ENCODE measurements at regions of chr17 and their contacts with region 1.

Region 1: DNA sequence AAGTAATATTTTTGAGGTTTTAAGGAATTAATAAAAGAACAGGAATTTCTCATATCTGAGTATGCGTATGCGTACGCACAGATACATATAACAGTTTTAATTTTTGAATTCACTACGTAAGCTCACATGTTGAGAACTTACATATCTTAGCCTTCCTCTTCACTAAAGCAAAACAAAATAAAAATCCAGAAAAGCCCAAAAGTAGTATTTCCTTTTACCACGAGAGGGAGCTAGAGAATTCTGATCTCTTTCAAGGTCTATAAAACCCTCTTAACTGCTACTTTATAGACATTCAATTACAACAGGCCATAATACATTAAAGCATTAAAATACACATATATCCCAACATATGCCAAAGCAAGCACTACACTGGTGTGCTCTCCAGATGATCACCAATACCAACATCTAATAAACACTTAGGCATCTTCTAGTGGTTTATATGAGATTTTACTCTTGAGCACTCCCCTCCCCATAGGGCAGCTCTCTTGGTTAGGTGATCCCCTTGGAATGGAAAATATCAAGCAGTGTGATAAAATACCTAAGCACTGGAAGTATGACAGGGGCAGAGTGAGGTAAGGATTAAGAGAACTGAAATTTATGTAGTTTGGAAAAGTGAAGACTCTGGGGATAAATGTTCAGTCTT is 94.0 kb downstream of the SKAP1 start:
- DNase-seq: no peak
- ATAC-seq: peak; percentile 50
- H3K4me3 ChIP-seq: no peak overlapping the region
- H3K27ac ChIP-seq: no peak overlapping the region
- H3K4me1 ChIP-seq: no peaks in the 10 kb centered on the region
- H3K27me3 ChIP-seq: peaks cover 0 to 10% of the 10 kb centered on the region in 2 donors
- CTCF ChIP-seq: peak; percentile 45 to 72 (median 69)
- POLR2A ChIP-seq: no peak

Region 2: GRCh38 chr17:48213797-48214196 is 122.2 kb before region 1 on chr17:
- intact Hi-C with region 1: no loop called
- DNase-seq: peak; percentile 12 to 55 (median 24)
- ATAC-seq: peak; percentile 35
- H3K4me3 ChIP-seq: no peak overlapping the region
- H3K27ac ChIP-seq: no peak overlapping the region
- H3K4me1 ChIP-seq: peaks cover 14% of the 10 kb centered on the region
- H3K27me3 ChIP-seq: no peaks in the 10 kb centered on the region
- CTCF ChIP-seq: no peak
- POLR2A ChIP-seq: no peak

Region 3: DNA sequence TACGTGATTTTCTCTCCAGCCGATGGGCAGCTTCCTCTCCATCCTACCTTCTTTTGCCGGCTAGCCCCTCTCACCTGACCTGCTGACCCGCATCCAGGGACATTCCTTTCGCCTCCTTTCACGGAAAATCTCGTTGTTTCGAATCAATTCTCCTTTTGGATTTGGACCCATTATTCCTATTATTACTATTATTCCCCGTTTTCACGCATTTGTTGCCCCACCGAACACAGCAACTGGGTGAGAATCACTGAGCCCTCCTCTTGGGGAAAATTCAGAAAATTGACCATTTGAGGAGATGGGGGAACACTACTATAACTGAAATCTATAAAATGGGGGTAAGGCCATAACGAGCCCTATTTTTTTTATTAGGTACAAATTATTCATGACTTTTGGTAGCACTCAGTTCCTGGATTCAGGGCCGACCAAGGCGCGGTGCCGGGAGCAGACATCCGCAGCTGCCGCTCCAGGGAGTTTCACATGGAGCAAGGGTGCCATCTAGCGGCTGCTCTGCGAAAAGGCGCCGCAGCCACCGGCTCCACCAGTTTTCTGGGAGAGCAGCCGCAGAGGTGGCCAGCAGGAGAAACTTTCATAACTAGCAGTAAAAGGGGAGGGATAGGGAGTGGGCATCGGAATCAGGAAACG is 282.4 kb after region 1 on chr17:
- intact Hi-C with region 1: loop called (anchors 10 kb)
- DNase-seq: peak; percentile 87 to 92 (median 91)
- ATAC-seq: peak; percentile 92
- H3K4me3 ChIP-seq: no peak overlapping the region
- H3K27ac ChIP-seq: no peak overlapping the region
- H3K4me1 ChIP-seq: peaks cover 12% of the 10 kb centered on the region
- H3K27me3 ChIP-seq: peaks cover 3 to 67% of the 10 kb centered on the region in 2 donors
- CTCF ChIP-seq: peak; percentile 94 to 99 (median 98)
- POLR2A ChIP-seq: no peak